CD4-positive, alpha-beta T cell (primary cell): ENCODE measurements at regions of chr17 and their contacts with region 1.

Region 1: DNA sequence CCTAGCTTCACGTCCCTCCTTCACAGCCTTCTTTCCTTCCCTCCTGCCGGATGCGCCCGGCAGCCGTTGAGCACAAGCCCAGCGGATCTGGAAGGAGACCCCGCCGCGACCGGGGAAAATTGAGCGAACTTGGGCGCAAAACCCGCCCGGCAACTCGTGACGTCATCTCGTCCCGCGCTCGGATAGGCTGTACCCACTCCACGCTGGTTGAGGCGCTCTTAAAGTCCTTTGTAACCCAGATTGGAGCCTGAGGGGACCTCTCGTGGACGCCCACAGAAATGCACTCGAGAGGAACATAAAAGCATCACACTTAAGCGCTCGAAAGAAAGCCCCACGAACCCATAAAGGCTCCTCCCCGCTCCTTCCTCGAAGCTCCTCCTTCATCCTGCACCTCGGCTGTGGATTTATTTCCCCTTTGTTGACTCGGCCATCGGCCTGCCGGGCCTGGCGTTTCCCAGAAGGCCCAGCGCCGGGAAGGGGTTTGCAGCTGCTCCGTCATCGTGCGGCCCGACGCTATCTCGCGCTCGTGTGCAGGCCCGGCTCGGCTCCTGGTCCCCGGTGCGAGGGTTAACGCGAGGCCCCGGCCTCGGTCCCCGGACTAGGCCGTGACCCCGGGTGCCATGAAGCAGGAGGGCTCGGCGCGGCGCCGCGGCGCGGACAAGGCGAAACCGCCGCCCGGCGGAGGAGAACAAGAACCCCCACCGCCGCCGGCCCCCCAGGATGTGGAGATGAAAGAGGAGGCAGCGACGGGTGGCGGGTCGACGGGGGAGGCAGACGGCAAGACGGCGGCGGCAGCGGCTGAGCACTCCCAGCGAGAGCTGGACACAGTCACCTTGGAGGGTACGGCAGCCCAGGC is at the start of gene PSMD3:
- DNase-seq: peak; percentile 95 to 100 (median 98)
- ATAC-seq: peak; percentile 94
- H3K4me3 ChIP-seq: peak within 1 kb of the TSS; percentile 96
- H3K4me3 Mint-ChIP-seq: peak within 1 kb of the TSS; percentile 89
- H3K27ac ChIP-seq: peak within 1 kb of the TSS; percentile 89 to 97
- H3K27ac Mint-ChIP-seq: peak within 1 kb of the TSS; percentile 95
- H3K4me1 ChIP-seq: peaks cover 25% of the 10 kb centered on the region
- H3K4me1 Mint-ChIP-seq: peaks cover 39% of the 10 kb centered on the region
- H3K27me3 ChIP-seq: no peaks in the 10 kb centered on the region
- H3K27me3 Mint-ChIP-seq: no peaks in the 10 kb centered on the region
- CTCF ChIP-seq: peak; percentile 70
- total RNA-seq, gene PSMD3: 66.7 to 71.9 TPM

Region 2: DNA sequence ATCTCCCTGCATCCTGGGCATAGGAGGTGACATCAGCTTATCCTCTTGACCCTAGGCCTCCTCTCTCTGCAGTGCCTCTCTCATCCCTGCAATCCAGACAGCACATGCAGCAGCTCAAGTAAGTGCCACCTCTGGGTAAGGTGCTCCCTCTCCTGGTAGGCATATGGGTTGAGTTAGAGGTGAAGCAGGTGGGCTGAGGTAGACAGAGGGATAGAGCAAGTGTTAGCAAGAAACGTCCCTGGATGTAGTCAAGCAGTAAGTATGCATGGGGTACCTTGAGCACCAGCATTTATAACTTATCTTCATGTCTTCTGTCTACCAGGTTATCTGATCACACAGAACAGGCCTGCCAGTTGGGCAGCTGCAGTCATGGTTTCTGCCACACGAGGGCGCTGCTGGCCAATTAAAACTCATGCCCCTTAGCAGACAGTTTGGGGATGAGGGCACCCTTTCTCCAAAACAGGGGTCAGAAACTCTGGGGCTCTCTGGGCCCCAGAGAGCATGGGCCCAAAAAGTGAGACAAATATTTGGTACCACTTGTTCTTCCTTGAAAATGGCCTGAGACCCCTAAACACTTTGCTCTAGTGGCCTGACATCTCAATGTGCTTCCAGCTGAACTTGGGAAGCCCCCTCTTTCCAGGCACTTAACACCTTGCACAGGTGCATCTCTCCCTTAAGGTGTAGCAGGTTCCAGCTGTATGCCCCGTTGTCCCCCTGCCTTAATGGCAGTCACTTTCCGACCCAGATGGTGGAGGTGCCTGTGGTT is 432.7 kb before region 1 on chr17:
- CTCF ChIA-PET with region 1: no interaction called
- POLR2A ChIA-PET with region 1: interaction called, 5 read pairs
- intact Hi-C with region 1: loop called (anchors 5 to 10 kb)
- DNase-seq: peak; percentile 56 to 85 (median 74)
- ATAC-seq: peak; percentile 85
- H3K4me3 ChIP-seq: no peak overlapping the region
- H3K4me3 Mint-ChIP-seq: no peak overlapping the region
- H3K27ac ChIP-seq: no peak overlapping the region
- H3K27ac Mint-ChIP-seq: no peak overlapping the region
- H3K4me1 ChIP-seq: no peaks in the 10 kb centered on the region
- H3K4me1 Mint-ChIP-seq: no peaks in the 10 kb centered on the region
- H3K27me3 ChIP-seq: no peaks in the 10 kb centered on the region
- H3K27me3 Mint-ChIP-seq: no peaks in the 10 kb centered on the region
- CTCF ChIP-seq: peak; percentile 96

Region 3: DNA sequence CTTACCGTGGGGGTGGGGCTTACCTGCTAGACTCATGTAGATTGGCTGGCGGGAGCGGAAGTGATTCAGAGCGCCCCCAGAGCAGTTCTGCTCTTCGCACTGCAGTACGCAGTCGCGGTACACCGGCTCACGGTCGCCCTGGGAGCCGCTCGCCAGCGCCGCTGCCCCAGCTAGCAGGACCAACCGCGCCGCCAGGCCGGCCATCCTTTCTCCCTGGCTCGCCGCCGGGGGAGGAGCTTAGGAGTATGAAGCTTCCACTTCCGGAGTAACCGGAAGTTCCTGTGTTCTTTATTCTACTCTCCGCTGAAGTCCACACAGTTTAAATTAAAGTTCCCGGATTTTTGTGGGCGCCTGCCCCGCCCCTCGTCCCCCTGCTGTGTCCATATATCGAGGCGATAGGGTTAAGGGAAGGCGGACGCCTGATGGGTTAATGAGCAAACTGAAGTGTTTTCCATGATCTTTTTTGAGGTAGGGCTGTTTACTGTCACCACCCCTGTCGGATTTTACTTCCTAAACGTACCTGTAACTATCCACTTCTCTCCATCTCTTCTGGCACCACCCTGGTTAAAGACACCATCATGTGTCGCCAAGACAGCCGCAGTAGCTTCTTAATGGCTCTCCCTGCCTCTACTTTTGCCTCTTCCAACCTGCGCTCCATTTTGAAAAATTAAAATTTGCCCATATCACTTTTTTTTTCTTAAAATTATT is 292.6 kb before region 1 on chr17 and contains the start of gene PGAP3:
- CTCF ChIA-PET with region 1: no interaction called
- POLR2A ChIA-PET with region 1: no interaction called
- intact Hi-C with region 1: loop called in 1 of 2 experiments (anchors 2 kb)
- DNase-seq: peak; percentile 66 to 91 (median 74)
- ATAC-seq: peak; percentile 87
- H3K4me3 ChIP-seq: peak within 1 kb of the TSS; percentile 74
- H3K4me3 Mint-ChIP-seq: peak within 1 kb of the TSS; percentile 100
- H3K27ac ChIP-seq: peak within 1 kb of the TSS; percentile 83
- H3K27ac Mint-ChIP-seq: peak within 1 kb of the TSS; percentile 98
- H3K4me1 ChIP-seq: peaks cover 19% of the 10 kb centered on the region
- H3K4me1 Mint-ChIP-seq: peaks cover 31% of the 10 kb centered on the region
- H3K27me3 ChIP-seq: no peaks in the 10 kb centered on the region
- H3K27me3 Mint-ChIP-seq: no peaks in the 10 kb centered on the region
- CTCF ChIP-seq: no peak
- total RNA-seq, gene PGAP3: 26.1 to 30.7 TPM

Region 4: DNA sequence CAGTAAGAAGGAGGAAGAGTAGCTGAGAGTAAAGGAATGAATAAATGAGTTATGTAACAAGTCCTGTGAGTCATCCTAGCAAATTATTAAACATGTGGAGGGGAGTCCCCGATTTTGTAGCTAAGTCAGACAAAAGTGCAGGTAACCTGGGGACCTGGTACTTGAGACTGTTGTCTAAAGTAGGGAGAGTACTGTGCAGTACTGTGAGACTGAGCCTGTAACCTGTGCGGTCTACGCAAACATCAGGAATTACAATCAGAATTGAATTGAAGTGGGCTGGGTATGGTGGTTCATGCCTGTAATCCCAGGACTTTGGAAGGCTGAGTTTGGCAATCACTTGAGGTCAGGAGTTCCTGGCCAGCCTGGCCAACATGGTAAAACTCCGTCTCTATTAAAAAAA is 152.1 kb before region 1 on chr17:
- CTCF ChIA-PET with region 1: no interaction called
- POLR2A ChIA-PET with region 1: no interaction called
- intact Hi-C with region 1: no loop called
- DNase-seq: no peak
- ATAC-seq: no peak
- H3K4me3 ChIP-seq: no peak overlapping the region
- H3K4me3 Mint-ChIP-seq: no peak overlapping the region
- H3K27ac ChIP-seq: no peak overlapping the region
- H3K27ac Mint-ChIP-seq: peak overlapping the region; percentile 52
- H3K4me1 ChIP-seq: no peaks in the 10 kb centered on the region
- H3K4me1 Mint-ChIP-seq: peaks cover 20% of the 10 kb centered on the region
- H3K27me3 ChIP-seq: no peaks in the 10 kb centered on the region
- H3K27me3 Mint-ChIP-seq: no peaks in the 10 kb centered on the region
- CTCF ChIP-seq: no peak

Region 5: GRCh38 chr17:39852239-39852638 is 128.3 kb before region 1 on chr17:
- CTCF ChIA-PET with region 1: no interaction called
- POLR2A ChIA-PET with region 1: no interaction called
- intact Hi-C with region 1: no loop called
- DNase-seq: no peak
- ATAC-seq: no peak
- H3K4me3 ChIP-seq: no peak overlapping the region
- H3K4me3 Mint-ChIP-seq: no peak overlapping the region
- H3K27ac ChIP-seq: peak overlapping the region in 1 of 2 donors; percentile 43
- H3K27ac Mint-ChIP-seq: peak overlapping the region; percentile 18
- H3K4me1 ChIP-seq: peaks cover 21% of the 10 kb centered on the region
- H3K4me1 Mint-ChIP-seq: peaks cover 55% of the 10 kb centered on the region
- H3K27me3 ChIP-seq: no peaks in the 10 kb centered on the region
- H3K27me3 Mint-ChIP-seq: no peaks in the 10 kb centered on the region
- CTCF ChIP-seq: no peak

Region 6: DNA sequence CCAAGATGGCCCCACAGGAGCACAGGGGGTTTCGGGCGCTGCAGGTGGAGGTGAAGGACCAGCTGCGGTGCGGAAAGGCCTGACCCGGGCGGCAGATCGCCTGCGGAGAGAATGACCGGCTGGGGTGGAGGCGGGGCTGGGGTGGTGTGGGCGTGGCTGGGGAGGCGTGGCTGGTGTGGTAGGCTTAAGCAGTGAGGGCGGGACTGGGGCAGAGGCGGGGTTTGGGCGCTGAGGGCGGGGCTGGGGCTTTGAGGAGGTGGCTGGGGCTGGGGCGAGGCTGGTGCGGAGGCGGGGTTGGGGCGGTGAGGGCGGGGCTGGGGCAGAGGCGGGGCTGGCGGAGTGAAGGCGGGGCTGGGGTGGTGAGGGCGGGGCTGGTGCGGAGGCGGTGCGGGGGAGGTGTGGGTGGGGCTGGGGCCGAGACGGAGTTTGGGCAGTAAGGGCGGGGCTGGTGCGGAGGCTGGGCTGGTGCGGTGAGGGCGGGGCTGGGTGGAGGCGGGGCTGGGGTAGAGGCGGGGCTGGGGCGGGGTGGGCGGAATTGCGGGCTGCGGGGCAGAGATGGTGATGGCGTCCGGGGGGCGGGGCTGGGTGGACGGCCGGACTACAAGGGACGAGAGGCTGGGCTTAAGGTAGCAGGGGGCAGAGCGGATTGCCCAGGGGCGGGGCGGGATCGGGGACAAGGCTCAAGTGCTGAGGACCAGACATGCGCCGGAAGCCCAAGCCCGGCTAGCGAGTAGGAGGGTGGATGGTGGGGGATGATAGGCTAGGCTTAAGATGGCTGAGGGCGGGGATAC is 27.7 kb before region 1 on chr17:
- CTCF ChIA-PET with region 1: interaction called, 55 read pairs
- POLR2A ChIA-PET with region 1: interaction called, 46 read pairs
- intact Hi-C with region 1: no loop called
- DNase-seq: peak; percentile 90 to 99 (median 98)
- ATAC-seq: peak; percentile 86
- H3K4me3 ChIP-seq: peak overlapping the region; percentile 66
- H3K4me3 Mint-ChIP-seq: peak overlapping the region; percentile 90
- H3K27ac ChIP-seq: peak overlapping the region; percentile 22 to 41
- H3K27ac Mint-ChIP-seq: peak overlapping the region; percentile 77
- H3K4me1 ChIP-seq: peaks cover 20% of the 10 kb centered on the region
- H3K4me1 Mint-ChIP-seq: peaks cover 25% of the 10 kb centered on the region
- H3K27me3 ChIP-seq: no peaks in the 10 kb centered on the region
- H3K27me3 Mint-ChIP-seq: no peaks in the 10 kb centered on the region
- CTCF ChIP-seq: no peak

Region 7: DNA sequence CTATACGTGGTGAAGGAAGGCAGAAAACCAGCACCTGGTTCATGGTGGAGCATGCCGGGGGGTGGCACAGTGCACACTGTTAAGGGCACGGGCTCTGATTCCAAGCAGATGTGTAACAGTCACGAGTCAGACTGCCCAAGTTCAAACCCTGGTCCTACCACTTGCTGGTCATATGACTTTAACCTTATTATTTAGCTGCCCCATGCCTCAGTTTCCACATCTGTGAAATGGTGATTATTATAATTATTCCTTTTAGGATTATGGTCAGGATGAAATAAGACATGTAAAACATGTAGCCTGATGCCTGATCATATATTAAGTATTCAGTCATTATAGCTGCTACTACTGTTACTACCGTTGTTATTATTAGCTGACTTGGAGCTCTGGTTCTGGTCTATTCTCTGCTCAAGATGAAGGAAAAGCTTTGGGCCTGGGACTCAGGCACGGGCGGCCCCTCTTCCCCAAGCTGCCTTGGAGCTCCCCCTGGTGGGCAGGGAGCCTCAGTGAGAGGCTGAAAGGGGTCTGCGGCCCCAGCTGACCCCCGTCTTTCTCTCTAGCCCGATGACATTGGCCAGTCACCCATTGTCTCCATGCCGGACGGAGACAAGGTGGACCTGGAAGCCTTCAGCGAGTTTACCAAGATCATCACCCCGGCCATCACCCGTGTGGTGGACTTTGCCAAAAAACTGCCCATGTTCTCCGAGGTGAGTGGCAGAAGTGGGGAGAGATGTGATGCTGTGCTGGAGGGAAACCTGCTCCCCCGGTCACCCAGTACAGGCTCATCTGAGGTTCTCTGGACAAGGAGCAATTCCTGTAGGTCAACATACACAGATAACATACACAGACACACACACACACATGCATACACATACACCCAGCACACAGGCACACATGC is 105.8 kb after region 1 on chr17:
- CTCF ChIA-PET with region 1: no interaction called
- POLR2A ChIA-PET with region 1: no interaction called
- intact Hi-C with region 1: no loop called
- DNase-seq: peak; percentile 46 to 78 (median 59)
- ATAC-seq: peak; percentile 68
- H3K4me3 ChIP-seq: no peak overlapping the region
- H3K4me3 Mint-ChIP-seq: no peak overlapping the region
- H3K27ac ChIP-seq: no peak overlapping the region
- H3K27ac Mint-ChIP-seq: no peak overlapping the region
- H3K4me1 ChIP-seq: peaks cover 9% of the 10 kb centered on the region
- H3K4me1 Mint-ChIP-seq: peaks cover 15% of the 10 kb centered on the region
- H3K27me3 ChIP-seq: no peaks in the 10 kb centered on the region
- H3K27me3 Mint-ChIP-seq: no peaks in the 10 kb centered on the region
- CTCF ChIP-seq: peak; percentile 89

Region 8: GRCh38 chr17:40219073-40219860 is 238.7 kb after region 1 on chr17 and contains the start of gene WIPF2:
- CTCF ChIA-PET with region 1: interaction called, 6 read pairs
- POLR2A ChIA-PET with region 1: interaction called, 10 read pairs
- intact Hi-C with region 1: no loop called
- DNase-seq: peak; percentile 91 to 98 (median 95)
- ATAC-seq: peak; percentile 90
- H3K4me3 ChIP-seq: peak within 1 kb of the TSS; percentile 58
- H3K4me3 Mint-ChIP-seq: peak within 1 kb of the TSS; percentile 94
- H3K27ac ChIP-seq: peak within 1 kb of the TSS; percentile 86 to 97
- H3K27ac Mint-ChIP-seq: peak within 1 kb of the TSS; percentile 88
- H3K4me1 ChIP-seq: peaks cover 25% of the 10 kb centered on the region
- H3K4me1 Mint-ChIP-seq: peaks cover 34% of the 10 kb centered on the region
- H3K27me3 ChIP-seq: no peaks in the 10 kb centered on the region
- H3K27me3 Mint-ChIP-seq: no peaks in the 10 kb centered on the region
- CTCF ChIP-seq: peak; percentile 62
- total RNA-seq, gene WIPF2: 17.3 to 21.3 TPM